Activated naive CD4-positive, alpha-beta T cell treated with anti-CD3 and anti-CD28 coated beads for 36 hours (primary cell): ENCODE measurements at regions of chr4 and their contacts with region 1.

Region 1: DNA sequence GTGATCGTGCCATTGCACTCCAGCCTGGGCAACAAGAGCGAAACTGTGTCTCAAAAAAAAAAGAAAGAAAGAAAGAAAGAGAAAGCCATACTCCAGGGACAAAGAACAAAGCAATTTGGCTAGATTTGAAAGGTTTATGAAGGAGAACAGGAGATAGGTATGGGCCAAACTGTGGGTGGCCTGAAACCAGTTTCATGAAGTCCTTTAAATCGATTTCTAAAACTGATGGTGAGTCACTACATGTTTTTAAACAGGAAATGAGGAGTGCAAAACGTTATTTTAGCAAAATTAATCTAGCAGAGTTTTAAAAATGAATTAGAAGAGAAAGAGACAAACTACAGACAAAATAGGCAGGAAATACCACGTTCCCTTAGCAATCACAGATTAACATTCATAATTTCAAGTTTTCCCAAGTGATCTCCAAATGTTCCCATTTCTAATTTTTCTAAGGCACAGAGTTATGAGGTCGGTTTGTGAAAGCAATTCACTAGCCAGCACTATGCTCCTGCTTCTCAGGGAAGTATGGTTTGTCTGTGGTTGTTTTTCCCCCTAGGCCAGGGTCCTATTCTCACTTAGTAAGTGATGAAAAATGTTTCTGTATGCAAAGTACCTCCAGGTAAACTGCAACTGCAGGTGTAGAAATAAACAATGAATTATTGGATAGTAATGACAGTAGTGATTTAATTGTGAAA is 190.6 kb downstream of the PPP3CA start:
- DNase-seq: no peak
- H3K4me3 Mint-ChIP-seq: no peak overlapping the region
- H3K27ac Mint-ChIP-seq: no peak overlapping the region
- H3K4me1 Mint-ChIP-seq: peaks cover 28% of the 10 kb centered on the region
- H3K27me3 Mint-ChIP-seq: no peaks in the 10 kb centered on the region

Region 2: GRCh38 chr4:101037938-101038413 is 118.8 kb before region 1 on chr4:
- CTCF ChIA-PET with region 1: no interaction called
- intact Hi-C with region 1: loop called (anchors 1 kb)
- DNase-seq: no peak
- H3K4me3 Mint-ChIP-seq: no peak overlapping the region
- H3K27ac Mint-ChIP-seq: no peak overlapping the region
- H3K4me1 Mint-ChIP-seq: peaks cover 13% of the 10 kb centered on the region
- H3K27me3 Mint-ChIP-seq: no peaks in the 10 kb centered on the region